Heart right ventricle (tissue), 16 donors: ENCODE measurements at regions of chr9 and their contacts with region 1.

Region 1: DNA sequence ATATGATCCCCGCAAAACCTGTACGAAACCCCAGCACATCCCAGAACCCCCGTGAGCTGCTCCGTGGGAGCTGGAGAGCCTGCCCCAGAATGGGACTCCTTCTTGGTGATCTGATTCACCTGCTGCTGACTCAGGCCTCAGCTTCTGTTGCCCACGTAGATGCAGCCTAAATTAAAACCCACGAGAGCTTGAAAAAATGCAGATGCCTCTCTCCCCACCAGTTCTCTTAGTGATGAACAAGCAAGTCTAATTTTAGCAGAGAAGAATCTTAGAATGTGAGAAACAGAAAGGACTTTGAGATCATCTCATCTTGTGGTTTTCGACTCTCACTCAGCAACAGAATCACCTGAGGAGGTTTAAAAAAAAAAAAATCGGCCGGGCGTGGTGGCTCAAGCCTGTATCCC is 57.6 kb downstream of the TMOD1 start:
- DNase-seq: no peak
- ATAC-seq: no peak
- H3K4me3 ChIP-seq: no peak overlapping the region
- H3K27ac ChIP-seq: peak overlapping the region; percentile 26 to 90 (median 83)
- H3K4me1 ChIP-seq: peaks cover 21 to 82% (median 70%) of the 10 kb centered on the region in 9 donors
- H3K27me3 ChIP-seq: no peaks in the 10 kb centered on the region
- CTCF ChIP-seq: no peak

Region 2: DNA sequence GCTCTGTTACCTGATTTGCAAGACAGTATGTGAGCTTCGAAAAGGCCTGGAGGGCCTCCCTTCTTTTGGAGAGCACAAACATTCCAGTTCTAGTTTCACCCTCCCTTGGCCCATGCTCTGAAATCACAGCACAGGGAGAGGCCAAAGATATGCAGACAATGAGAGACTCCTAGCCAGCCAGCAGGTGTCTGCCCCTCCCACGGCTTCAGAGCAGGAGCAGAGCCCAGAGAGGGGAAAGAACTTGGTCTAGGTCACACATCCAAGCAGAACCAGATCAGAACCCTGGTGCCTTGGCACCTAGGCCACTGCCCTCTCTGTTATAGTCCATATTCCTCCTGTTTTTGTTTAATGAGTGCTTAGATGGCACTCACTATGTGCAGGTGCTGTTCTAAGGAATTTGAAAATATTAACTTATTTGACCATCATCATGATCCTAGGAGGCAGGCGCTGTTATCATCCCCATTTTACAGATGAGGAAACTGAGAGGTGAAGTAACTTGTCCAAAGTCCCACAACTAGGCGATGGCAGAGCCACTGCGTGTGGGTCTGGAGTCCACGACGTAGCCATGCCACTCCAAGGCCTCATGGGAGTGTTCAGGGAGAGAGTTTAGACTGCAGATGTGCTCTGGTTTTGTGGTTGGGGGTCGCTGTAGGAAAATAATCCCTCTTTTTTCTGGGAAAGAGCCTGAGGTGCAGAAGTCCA is 30.4 kb before region 1 on chr9:
- intact Hi-C with region 1: loop called in 1 of 10 experiments (anchors 1 kb)
- DNase-seq: peak in 1 of 2 donors; percentile 41
- ATAC-seq: peak; percentile 28 to 75 (median 62)
- H3K4me3 ChIP-seq: no peak overlapping the region
- H3K27ac ChIP-seq: peak overlapping the region; percentile 13 to 85 (median 78)
- H3K4me1 ChIP-seq: peaks cover 13 to 65% (median 35%) of the 10 kb centered on the region in 9 donors
- H3K27me3 ChIP-seq: no peaks in the 10 kb centered on the region
- CTCF ChIP-seq: no peak

Region 3: GRCh38 chr9:97536480-97536879 is 22.6 kb before region 1 on chr9:
- intact Hi-C with region 1: loop called in 1 of 10 experiments (anchors 2 kb)
- DNase-seq: no peak
- ATAC-seq: peak in 5 of 8 donors; percentile 24 to 50 (median 27)
- H3K4me3 ChIP-seq: no peak overlapping the region
- H3K27ac ChIP-seq: peak overlapping the region in 7 of 10 donors; percentile 15 to 51 (median 46)
- H3K4me1 ChIP-seq: peaks cover 5 to 51% (median 28%) of the 10 kb centered on the region in 9 donors
- H3K27me3 ChIP-seq: no peaks in the 10 kb centered on the region
- CTCF ChIP-seq: no peak

Region 4: DNA sequence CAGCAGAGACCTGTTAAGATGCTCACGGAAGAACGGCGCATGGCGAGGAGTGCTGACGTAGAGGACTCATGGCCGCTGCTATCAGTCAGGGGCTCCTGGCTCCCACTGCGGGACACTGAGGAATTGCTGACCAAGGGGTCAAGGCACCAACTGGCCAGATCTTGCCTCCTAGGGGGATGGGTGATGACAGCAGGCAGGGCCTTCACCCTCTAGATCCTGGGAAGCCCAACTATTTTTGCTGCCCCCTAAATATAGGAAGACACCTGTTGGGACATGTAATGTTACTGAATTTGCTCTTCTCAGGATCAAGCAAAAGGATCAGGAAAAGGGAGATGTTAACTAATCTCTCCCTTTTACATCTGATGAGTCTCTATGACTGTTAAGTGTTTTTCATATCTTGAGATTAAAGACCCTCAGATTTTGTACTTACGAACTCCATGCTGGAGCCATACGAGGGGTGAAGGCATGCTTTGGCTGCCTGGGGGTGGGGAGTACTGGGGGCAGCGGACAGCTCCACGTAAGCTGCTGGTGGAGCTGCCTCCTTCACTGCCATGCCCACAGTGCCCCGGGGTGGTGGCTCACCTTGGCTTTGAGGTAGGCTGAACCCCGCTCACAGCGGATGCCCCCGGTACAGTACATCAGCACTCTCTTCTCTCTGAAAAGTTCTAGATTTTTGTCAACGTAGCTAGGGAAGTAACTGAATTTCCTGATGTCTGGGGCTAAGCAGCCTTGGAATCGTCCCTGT is 46.0 kb after region 1 on chr9:
- intact Hi-C with region 1: no loop called
- DNase-seq: no peak
- ATAC-seq: no peak
- H3K4me3 ChIP-seq: no peak overlapping the region
- H3K27ac ChIP-seq: no peak overlapping the region
- H3K4me1 ChIP-seq: peaks cover 0 to 28% (median 10%) of the 10 kb centered on the region in 9 donors
- H3K27me3 ChIP-seq: no peaks in the 10 kb centered on the region
- CTCF ChIP-seq: no peak